T-cell (primary cell): ENCODE measurements at regions of chr6 and their contacts with region 1.

Region 1: GRCh38 chr6:17741507-17741906 is 34.8 kb upstream of the NUP153 start:
- DNase-seq: no peak
- ATAC-seq: no peak
- H3K4me3 ChIP-seq: no peak overlapping the region
- H3K4me3 Mint-ChIP-seq: no peak overlapping the region
- H3K27ac ChIP-seq: no peak overlapping the region
- H3K27ac Mint-ChIP-seq: no peak overlapping the region
- H3K4me1 ChIP-seq: no peaks in the 10 kb centered on the region
- H3K4me1 Mint-ChIP-seq: peaks cover 0 to 2% (median 0%) of the 10 kb centered on the region in 3 donors
- H3K27me3 ChIP-seq: peaks cover 0 to 18% of the 10 kb centered on the region in 2 experiments
- H3K27me3 Mint-ChIP-seq: peaks cover 5 to 8% of the 10 kb centered on the region in 2 donors

Region 2: GRCh38 chr6:17574866-17575560 is 166.5 kb before region 1 on chr6:
- CTCF ChIA-PET with region 1: no interaction called
- POLR2A ChIA-PET with region 1: interaction called in 1 of 2 experiments, 12 read pairs
- DNase-seq: no peak
- ATAC-seq: no peak
- H3K4me3 ChIP-seq: no peak overlapping the region
- H3K4me3 Mint-ChIP-seq: no peak overlapping the region
- H3K27ac ChIP-seq: no peak overlapping the region
- H3K27ac Mint-ChIP-seq: no peak overlapping the region
- H3K4me1 ChIP-seq: peaks cover 0 to under 1% of the 10 kb centered on the region in 2 experiments
- H3K4me1 Mint-ChIP-seq: no peaks in the 10 kb centered on the region
- H3K27me3 ChIP-seq: peaks cover 3 to 17% of the 10 kb centered on the region in 2 experiments
- H3K27me3 Mint-ChIP-seq: peaks cover 23% of the 10 kb centered on the region in 2 donors